ENCODE measurements at regions of chr5 and their contacts with region 1.

Region 1: GRCh38 chr5:99060306-99061261 is 131.8 kb upstream of the CHD1 start:
- DNase-seq: peak; percentile 78 to 92 (median 87)
- ATAC-seq: peak; percentile 78
- H3K4me3 ChIP-seq: no peak overlapping the region
- H3K4me3 Mint-ChIP-seq: peak overlapping the region; percentile 23
- H3K27ac ChIP-seq: no peak overlapping the region
- H3K27ac Mint-ChIP-seq: no peak overlapping the region
- H3K4me1 ChIP-seq: no peaks in the 10 kb centered on the region
- H3K4me1 Mint-ChIP-seq: peaks cover 15% of the 10 kb centered on the region
- H3K27me3 ChIP-seq: no peaks in the 10 kb centered on the region
- H3K27me3 Mint-ChIP-seq: peaks cover 7% of the 10 kb centered on the region
- CTCF ChIP-seq: peak; percentile 92

Region 2: GRCh38 chr5:98786191-98786853 is 274.3 kb before region 1 on chr5:
- CTCF ChIA-PET with region 1: no interaction called
- POLR2A ChIA-PET with region 1: no interaction called
- intact Hi-C with region 1: loop called in 1 of 2 experiments (anchors 10 kb)
- DNase-seq: no peak
- ATAC-seq: no peak
- H3K4me3 ChIP-seq: no peak overlapping the region
- H3K4me3 Mint-ChIP-seq: no peak overlapping the region
- H3K27ac ChIP-seq: no peak overlapping the region
- H3K27ac Mint-ChIP-seq: no peak overlapping the region
- H3K4me1 ChIP-seq: no peaks in the 10 kb centered on the region
- H3K4me1 Mint-ChIP-seq: peaks cover 59% of the 10 kb centered on the region
- H3K27me3 ChIP-seq: no peaks in the 10 kb centered on the region
- H3K27me3 Mint-ChIP-seq: no peaks in the 10 kb centered on the region
- CTCF ChIP-seq: no peak

Region 3: DNA sequence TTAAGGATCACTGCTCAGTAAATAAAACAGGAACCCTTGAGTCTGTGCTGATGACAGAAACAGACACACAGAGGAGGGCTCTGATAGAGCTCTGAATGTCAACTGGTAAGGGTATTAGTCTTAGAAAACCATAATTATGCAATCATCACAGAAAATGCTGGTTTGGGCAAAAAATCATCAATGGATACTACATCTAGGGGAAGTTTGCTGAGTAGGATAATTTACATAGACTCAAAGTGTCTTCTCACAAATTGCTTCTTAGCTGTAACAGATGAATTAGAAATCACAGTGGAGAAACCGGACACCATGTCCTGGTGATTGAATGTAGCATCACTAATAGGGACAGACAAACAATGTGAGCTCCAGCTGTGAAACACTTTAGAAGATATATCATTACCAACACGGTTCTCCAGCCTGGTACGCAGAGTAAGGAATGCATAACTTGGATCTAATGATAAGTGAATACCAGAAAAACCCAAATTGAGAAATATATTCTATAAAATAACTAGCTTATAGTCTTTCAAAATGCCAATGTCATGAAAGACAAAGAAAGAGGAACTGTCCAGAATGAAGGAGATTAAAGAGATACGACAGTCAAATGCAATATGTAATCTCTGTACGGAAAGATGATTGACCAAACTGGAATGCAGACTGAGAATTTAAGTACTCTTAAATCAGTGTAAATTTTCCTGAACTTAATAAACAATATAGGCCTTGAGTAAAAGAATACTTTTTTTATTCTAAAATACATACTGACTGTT is 149.1 kb before region 1 on chr5:
- CTCF ChIA-PET with region 1: interaction called, 14 read pairs
- POLR2A ChIA-PET with region 1: interaction called, 6 read pairs
- intact Hi-C with region 1: loop called (anchors 1 kb)
- DNase-seq: peak in 1 of 14 experiments; percentile 17
- ATAC-seq: no peak
- H3K4me3 ChIP-seq: no peak overlapping the region
- H3K4me3 Mint-ChIP-seq: peak overlapping the region; percentile 11
- H3K27ac ChIP-seq: no peak overlapping the region
- H3K27ac Mint-ChIP-seq: peak overlapping the region; percentile 5
- H3K4me1 ChIP-seq: peaks cover 11% of the 10 kb centered on the region
- H3K4me1 Mint-ChIP-seq: peaks cover 76% of the 10 kb centered on the region
- H3K27me3 ChIP-seq: no peaks in the 10 kb centered on the region
- H3K27me3 Mint-ChIP-seq: no peaks in the 10 kb centered on the region
- CTCF ChIP-seq: no peak

Region 4: DNA sequence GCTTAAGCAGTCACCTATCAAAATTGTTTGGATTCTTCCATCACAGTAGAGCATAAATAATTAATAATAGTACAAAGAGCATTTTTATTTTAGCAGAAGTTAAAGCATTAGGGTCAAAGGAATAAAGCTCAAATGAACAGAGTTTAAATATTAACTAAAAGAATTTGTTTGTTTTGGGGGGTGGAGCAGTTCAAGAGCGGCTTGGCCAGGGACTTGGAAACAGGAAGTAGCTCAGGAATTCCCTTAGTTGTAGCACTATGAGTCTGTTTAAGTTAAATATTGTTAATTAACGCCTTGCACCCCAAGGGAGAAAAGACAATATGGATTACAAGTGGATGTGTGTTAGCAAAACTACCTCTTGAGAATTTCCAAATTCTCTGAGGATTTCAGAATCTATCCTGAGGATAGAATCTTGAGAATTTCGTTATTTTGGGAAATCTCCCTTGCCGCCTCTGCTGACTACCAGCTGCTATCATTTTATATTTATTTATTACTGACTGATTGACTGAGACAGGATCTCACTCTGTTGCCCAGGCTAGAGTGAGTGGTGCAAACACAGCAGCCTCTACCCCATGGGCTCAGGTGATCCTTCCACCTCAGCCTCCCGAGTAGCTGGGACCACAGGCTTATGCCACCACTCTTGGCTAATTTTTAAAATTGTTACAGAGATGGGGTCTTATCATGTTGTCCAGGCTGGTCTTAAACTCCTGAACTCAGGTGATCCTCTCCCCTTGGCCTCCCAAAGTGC is 35.1 kb before region 1 on chr5:
- CTCF ChIA-PET with region 1: interaction called, 5 read pairs
- POLR2A ChIA-PET with region 1: interaction called, 3 read pairs
- intact Hi-C with region 1: loop called in 1 of 2 experiments (anchors 5 kb)
- DNase-seq: no peak
- ATAC-seq: no peak
- H3K4me3 ChIP-seq: no peak overlapping the region
- H3K4me3 Mint-ChIP-seq: no peak overlapping the region
- H3K27ac ChIP-seq: no peak overlapping the region
- H3K27ac Mint-ChIP-seq: no peak overlapping the region
- H3K4me1 ChIP-seq: peaks cover 16% of the 10 kb centered on the region
- H3K4me1 Mint-ChIP-seq: peaks cover 30% of the 10 kb centered on the region
- H3K27me3 ChIP-seq: no peaks in the 10 kb centered on the region
- H3K27me3 Mint-ChIP-seq: no peaks in the 10 kb centered on the region
- CTCF ChIP-seq: no peak

Region 5: GRCh38 chr5:99187611-99188010 is 127.0 kb after region 1 on chr5:
- CTCF ChIA-PET with region 1: no interaction called
- POLR2A ChIA-PET with region 1: no interaction called
- intact Hi-C with region 1: no loop called
- DNase-seq: no peak
- ATAC-seq: no peak
- H3K4me3 ChIP-seq: no peak overlapping the region
- H3K4me3 Mint-ChIP-seq: no peak overlapping the region
- H3K27ac ChIP-seq: no peak overlapping the region
- H3K27ac Mint-ChIP-seq: no peak overlapping the region
- H3K4me1 ChIP-seq: no peaks in the 10 kb centered on the region
- H3K4me1 Mint-ChIP-seq: no peaks in the 10 kb centered on the region
- H3K27me3 ChIP-seq: no peaks in the 10 kb centered on the region
- H3K27me3 Mint-ChIP-seq: peaks cover 11% of the 10 kb centered on the region
- CTCF ChIP-seq: no peak